Gastrocnemius medialis (tissue), 4 donors: ENCODE measurements at regions of chr14 and their contacts with region 1.

Region 1: GRCh38 chr14:26598081-26598795 is 405 bp upstream of the NOVA1 start:
- DNase-seq: peak; percentile 72 to 78
- ATAC-seq: peak; percentile 78 to 83
- H3K4me3 ChIP-seq: peak overlapping the region; percentile 51 to 64 (median 59)
- H3K27ac ChIP-seq: peak overlapping the region; percentile 62 to 74 (median 68)
- H3K4me1 ChIP-seq: no peaks in the 10 kb centered on the region
- H3K27me3 ChIP-seq: peaks cover 7 to 21% (median 7%) of the 10 kb centered on the region in 3 donors
- CTCF ChIP-seq: no peak
- POLR2A ChIP-seq: peak in 1 of 2 donors; percentile 28

Region 2: DNA sequence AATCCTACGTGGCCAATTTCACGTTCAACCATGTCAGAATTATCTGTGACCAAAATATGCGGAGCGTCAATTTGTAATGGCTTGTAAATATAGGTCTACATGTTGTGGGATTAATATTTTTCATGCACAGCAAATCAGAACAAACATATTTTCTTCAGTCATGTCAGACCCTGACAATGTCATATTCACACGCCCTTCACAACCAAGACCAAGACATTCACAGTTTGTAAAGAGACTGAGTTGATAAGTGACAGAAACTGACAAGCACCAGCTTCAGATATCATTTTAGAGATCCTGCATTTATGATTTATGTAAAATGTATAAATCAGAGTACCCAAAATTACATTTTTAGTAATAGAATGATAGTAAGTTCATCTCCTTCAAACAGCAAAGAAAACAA is 56.9 kb after region 1 on chr14:
- in situ Hi-C with region 1: no loop called
- intact Hi-C with region 1: no loop called
- DNase-seq: no peak
- ATAC-seq: no peak
- H3K4me3 ChIP-seq: no peak overlapping the region
- H3K27ac ChIP-seq: no peak overlapping the region
- H3K4me1 ChIP-seq: no peaks in the 10 kb centered on the region
- H3K27me3 ChIP-seq: no peaks in the 10 kb centered on the region
- CTCF ChIP-seq: no peak
- POLR2A ChIP-seq: no peak

Region 3: DNA sequence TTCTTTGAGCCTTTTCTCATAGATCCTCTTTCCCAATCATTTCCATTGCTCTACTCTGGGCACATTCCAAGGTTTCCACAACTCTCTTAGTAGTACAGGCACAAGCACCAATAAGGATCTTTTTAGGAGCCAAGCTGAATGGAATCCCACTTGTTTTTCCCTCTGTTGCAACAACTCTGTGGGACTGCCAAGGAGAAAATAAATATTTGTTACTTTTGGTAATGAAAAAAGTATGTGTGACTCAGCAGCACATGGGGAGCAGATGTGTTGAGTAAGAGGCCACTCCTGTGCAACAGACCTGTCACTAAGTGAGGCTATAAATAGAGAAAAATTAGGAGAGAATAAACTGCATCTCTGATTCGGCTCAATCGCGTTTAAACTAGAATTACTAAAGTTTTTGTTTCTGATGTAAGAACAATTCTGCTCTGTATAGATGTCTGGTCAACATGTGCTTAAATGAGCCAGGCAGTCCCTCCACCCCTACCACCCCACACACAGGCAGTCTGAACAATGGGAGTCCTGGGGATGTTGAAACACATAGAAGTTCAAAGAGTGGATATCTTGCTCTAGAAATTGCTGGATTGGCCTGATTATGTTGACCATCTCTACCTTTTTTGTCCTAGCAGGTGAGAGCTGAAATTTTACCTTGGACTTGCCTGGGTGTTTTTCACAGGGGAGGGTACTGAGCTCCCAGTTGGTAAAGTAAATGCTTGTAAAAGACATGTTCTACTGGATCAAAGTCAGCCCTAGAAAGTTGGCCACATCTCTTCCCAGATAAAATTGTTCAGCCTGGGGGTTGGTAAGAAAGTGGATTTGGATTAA is 243.9 kb after region 1 on chr14:
- in situ Hi-C with region 1: no loop called
- intact Hi-C with region 1: loop called (anchors 10 kb)
- DNase-seq: peak; percentile 28 to 67
- ATAC-seq: peak; percentile 95 to 97
- H3K4me3 ChIP-seq: no peak overlapping the region
- H3K27ac ChIP-seq: peak overlapping the region; percentile 35 to 64 (median 54)
- H3K4me1 ChIP-seq: no peaks in the 10 kb centered on the region
- H3K27me3 ChIP-seq: no peaks in the 10 kb centered on the region
- CTCF ChIP-seq: no peak
- POLR2A ChIP-seq: no peak